ENCODE measurements at regions of chr5 and their contacts with region 1.

Region 1: GRCh38 chr5:150112261-150113046 is 26.1 kb upstream of the CSF1R start:
- DNase-seq: peak; percentile 72 to 76
- H3K4me3 ChIP-seq: no peak overlapping the region
- H3K27ac ChIP-seq: peak overlapping the region; percentile 80
- H3K4me1 ChIP-seq: peaks cover 51% of the 10 kb centered on the region
- H3K27me3 ChIP-seq: no peaks in the 10 kb centered on the region
- CTCF ChIP-seq: no peak

Region 2: GRCh38 chr5:150022163-150022540 is 90.3 kb before region 1 on chr5:
- CTCF ChIA-PET with region 1: interaction called, 4 read pairs
- POLR2A ChIA-PET with region 1: no interaction called
- intact Hi-C with region 1: loop called (anchors 2 kb)
- DNase-seq: peak; percentile 53 to 91
- H3K4me3 ChIP-seq: peak overlapping the region; percentile 33; the same call in 1 of the 2 replicates
- H3K27ac ChIP-seq: peak overlapping the region; percentile 93
- H3K4me1 ChIP-seq: peaks cover 59% of the 10 kb centered on the region
- H3K27me3 ChIP-seq: no peaks in the 10 kb centered on the region
- CTCF ChIP-seq: no peak

Region 3: GRCh38 chr5:150052956-150053712 is 59.3 kb before region 1 on chr5:
- CTCF ChIA-PET with region 1: no interaction called
- POLR2A ChIA-PET with region 1: no interaction called
- intact Hi-C with region 1: loop called (anchors 5 kb)
- DNase-seq: peak in 1 of 2 experiments; percentile 36
- H3K4me3 ChIP-seq: no peak overlapping the region
- H3K27ac ChIP-seq: no peak overlapping the region
- H3K4me1 ChIP-seq: peaks cover 12% of the 10 kb centered on the region
- H3K27me3 ChIP-seq: no peaks in the 10 kb centered on the region
- CTCF ChIP-seq: no peak

Region 4: DNA sequence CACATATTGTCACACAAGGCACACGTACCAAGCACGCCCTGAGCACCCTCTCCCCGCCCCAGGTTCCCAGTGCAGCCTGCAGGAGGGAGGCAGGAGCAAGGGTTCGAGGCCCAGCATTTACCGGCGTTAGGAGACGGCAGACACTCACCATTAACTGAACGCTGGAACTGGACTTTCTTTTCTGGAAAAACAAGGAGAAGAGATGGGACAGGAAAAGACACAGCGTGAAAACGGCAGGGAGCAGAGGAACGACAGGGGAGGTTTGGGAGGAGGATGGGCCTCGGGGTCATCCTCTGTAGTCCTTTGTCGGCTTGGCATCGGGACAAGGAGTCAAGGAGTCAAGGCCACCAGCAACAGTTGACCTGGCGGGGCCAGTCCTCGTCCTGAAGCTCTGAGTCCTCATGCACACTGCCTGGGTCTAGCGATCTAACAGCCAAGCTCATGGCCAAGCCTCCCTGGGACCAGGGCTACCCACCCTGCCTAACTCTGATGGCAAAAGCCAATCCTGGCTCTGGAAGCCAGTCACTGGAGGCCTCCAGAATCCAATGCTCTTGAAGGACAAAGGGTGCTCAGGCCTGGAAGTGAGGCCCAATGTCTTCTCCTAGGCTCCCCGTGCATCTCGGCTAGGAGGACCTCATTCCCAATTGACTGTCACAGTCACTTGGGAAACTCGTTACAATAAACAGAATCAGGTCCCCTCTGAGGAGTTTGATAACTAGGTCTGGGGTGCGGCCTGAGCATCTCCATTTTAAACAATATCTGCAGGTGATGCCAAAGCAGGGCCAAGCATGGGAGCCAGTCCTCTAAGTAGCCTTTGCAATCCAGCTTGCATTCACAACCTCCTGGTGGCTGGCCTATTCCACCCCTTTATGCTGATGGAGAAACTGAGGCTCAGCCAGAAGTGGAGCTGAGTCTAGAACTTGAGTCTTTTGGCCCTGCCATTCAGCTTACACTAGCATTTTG is 127.4 kb after region 1 on chr5:
- CTCF ChIA-PET with region 1: no interaction called
- POLR2A ChIA-PET with region 1: interaction called, 11 read pairs
- intact Hi-C with region 1: no loop called
- DNase-seq: no peak
- H3K4me3 ChIP-seq: no peak overlapping the region
- H3K27ac ChIP-seq: no peak overlapping the region
- H3K4me1 ChIP-seq: no peaks in the 10 kb centered on the region
- H3K27me3 ChIP-seq: 0 out of 2 replicates have a peak, but pooled peaks cover 4% of the 10 kb centered on the region
- CTCF ChIP-seq: no peak

Measured in PC-9 (cell line).